Left lung (tissue), 14 donors: ENCODE measurements at regions of chr3 and their contacts with region 1.

Region 1: GRCh38 chr3:119891944-119892721 is 110.2 kb downstream of the NR1I2 start:
- DNase-seq: peak in 2 of 4 donors; percentile 69 to 84
- ATAC-seq: peak; percentile 95
- H3K4me3 ChIP-seq: no peak overlapping the region
- H3K27ac ChIP-seq: no peak overlapping the region
- H3K4me1 ChIP-seq: peaks cover 3 to 10% of the 10 kb centered on the region in 2 donors
- H3K27me3 ChIP-seq: no peaks in the 10 kb centered on the region
- CTCF ChIP-seq: peak; percentile 35 to 57

Region 2: DNA sequence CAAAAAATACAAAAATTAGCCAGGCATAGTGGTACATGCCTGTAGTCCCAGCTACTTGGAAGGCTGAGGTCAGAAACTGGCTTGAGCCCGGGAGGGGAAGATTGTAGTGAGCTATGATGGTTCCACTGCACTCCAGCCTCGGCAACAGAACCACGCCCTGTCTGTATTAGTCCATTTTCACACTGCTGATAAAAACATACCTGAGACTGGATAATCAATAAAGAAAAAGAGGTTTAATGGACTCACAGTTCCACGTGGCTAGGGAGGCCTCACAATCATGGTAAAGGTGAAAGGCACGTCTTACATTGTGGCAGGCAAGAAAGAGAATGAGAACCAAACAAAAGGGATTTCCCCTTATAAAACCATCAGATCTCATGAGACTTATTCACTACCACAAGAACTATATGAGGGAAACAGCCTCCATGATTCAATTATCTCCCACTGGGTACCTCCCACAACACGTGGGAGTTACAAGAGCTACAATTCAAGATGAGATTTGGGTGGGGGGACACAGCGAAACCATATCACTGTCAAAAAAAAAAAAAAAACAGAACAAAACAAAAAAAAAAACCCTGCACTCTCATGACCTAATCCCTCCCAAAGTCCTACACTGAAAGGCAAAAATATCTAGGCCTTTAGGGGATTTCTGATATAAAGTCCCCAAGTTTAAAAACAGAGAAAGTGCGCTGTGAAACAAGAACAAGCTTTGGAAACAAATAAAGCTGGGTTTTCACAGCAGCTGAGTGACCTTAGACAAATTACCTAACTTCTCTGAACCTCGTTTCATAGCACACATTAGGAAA is 1082.2 kb before region 1 on chr3:
- intact Hi-C with region 1: no loop called
- DNase-seq: no peak
- ATAC-seq: no peak
- H3K4me3 ChIP-seq: no peak overlapping the region
- H3K27ac ChIP-seq: no peak overlapping the region
- H3K4me1 ChIP-seq: no peaks in the 10 kb centered on the region
- H3K27me3 ChIP-seq: no peaks in the 10 kb centered on the region
- CTCF ChIP-seq: no peak

Region 3: GRCh38 chr3:119794971-119795612 is 97.0 kb before region 1 on chr3:
- intact Hi-C with region 1: no loop called
- DNase-seq: no peak
- ATAC-seq: peak; percentile 64
- H3K4me3 ChIP-seq: no peak overlapping the region
- H3K27ac ChIP-seq: no peak overlapping the region
- H3K4me1 ChIP-seq: no peaks in the 10 kb centered on the region
- H3K27me3 ChIP-seq: no peaks in the 10 kb centered on the region
- CTCF ChIP-seq: no peak

Region 4: DNA sequence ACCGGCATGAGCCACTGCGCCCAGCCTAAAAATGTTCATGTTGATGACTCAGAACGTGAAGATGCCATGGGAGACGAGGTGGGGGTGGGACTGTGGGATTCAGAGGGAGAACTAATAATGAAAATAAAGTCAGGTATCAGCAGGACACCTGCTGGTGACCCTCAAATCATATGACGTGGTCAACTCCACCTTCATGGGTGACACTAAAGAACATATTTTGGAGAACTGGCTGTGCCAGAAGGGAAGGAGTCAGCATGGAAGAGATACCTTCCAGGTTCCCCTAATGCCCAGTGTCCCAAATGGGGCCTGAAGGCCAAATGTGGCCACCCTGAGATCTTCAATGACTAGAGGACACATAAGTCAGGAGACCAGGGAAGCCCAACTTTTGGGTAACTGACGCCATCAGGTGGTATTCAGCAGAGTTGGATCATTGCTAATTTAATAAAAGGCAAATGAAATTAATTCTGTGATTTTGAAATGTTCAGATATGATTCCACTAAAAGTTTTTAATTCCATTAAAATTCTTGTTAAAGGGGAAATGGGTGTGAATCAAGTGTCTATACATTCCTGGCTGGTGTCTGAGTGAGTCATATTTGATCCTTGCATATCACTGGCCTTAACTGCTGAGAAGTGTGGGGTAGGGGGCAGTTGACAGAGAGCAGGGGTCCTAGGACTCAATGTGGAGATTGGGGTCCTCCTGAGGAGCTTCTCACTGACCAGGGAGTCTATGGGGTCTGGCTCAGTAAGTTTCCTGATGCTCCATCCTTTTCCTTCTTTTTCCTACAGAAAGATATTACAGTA is 290.8 kb after region 1 on chr3:
- intact Hi-C with region 1: loop called in 1 of 2 experiments (anchors 10 kb)
- DNase-seq: no peak
- ATAC-seq: peak; percentile 83
- H3K4me3 ChIP-seq: no peak overlapping the region
- H3K27ac ChIP-seq: no peak overlapping the region
- H3K4me1 ChIP-seq: no peaks in the 10 kb centered on the region
- H3K27me3 ChIP-seq: no peaks in the 10 kb centered on the region
- CTCF ChIP-seq: peak in 1 of 2 donors; percentile 18